Endothelial cell of umbilical vein (primary cell): ENCODE measurements at regions of chr17 and their contacts with region 1.

Region 1: GRCh38 chr17:8997994-8998628 is 23.2 kb upstream of the NTN1 start:
- DNase-seq: peak; percentile 52
- H3K4me3 ChIP-seq: no peak overlapping the region
- H3K27ac ChIP-seq: no peak overlapping the region
- H3K4me1 ChIP-seq: no peaks in the 10 kb centered on the region
- H3K27me3 ChIP-seq: peaks cover 10 to 11% of the 10 kb centered on the region in 2 experiments
- CTCF ChIP-seq: peak; percentile 88 to 92
- POLR2A ChIP-seq: no peak

Region 2: GRCh38 chr17:8887834-8888703 is 110.0 kb before region 1 on chr17:
- CTCF ChIA-PET with region 1: interaction called, 19 read pairs
- POLR2A ChIA-PET with region 1: no interaction called
- dilution Hi-C with region 1: no loop called
- intact Hi-C with region 1: loop called (anchors 1 kb)
- DNase-seq: no peak
- H3K4me3 ChIP-seq: no peak overlapping the region
- H3K27ac ChIP-seq: no peak overlapping the region
- H3K4me1 ChIP-seq: no peaks in the 10 kb centered on the region
- H3K27me3 ChIP-seq: no peaks in the 10 kb centered on the region
- CTCF ChIP-seq: peak in 1 of 2 donors; percentile 8
- POLR2A ChIP-seq: no peak

Region 3: GRCh38 chr17:9529033-9529700 is 531.1 kb after region 1 on chr17:
- CTCF ChIA-PET with region 1: interaction called, 106 read pairs
- POLR2A ChIA-PET with region 1: no interaction called
- dilution Hi-C with region 1: no loop called
- intact Hi-C with region 1: no loop called
- DNase-seq: peak; percentile 24
- H3K4me3 ChIP-seq: no peak overlapping the region
- H3K27ac ChIP-seq: no peak overlapping the region
- H3K4me1 ChIP-seq: no peaks in the 10 kb centered on the region
- H3K27me3 ChIP-seq: no peaks in the 10 kb centered on the region
- CTCF ChIP-seq: peak; percentile 37 to 41
- POLR2A ChIP-seq: no peak